Naive thymus-derived CD4-positive, alpha-beta T cell (primary cell): ENCODE measurements at regions of chr7 and their contacts with region 1.

Region 1: GRCh38 chr7:29105752-29106668 is 40.3 kb downstream of the CPVL start:
- DNase-seq: peak in 4 of 9 donors; percentile 4 to 33 (median 14)
- ATAC-seq: peak; percentile 69
- H3K4me3 ChIP-seq: no peak overlapping the region
- H3K4me3 Mint-ChIP-seq: no peak overlapping the region
- H3K27ac ChIP-seq: no peak overlapping the region
- H3K27ac Mint-ChIP-seq: no peak overlapping the region
- H3K4me1 ChIP-seq: no peaks in the 10 kb centered on the region
- H3K4me1 Mint-ChIP-seq: peaks cover 0 to 5% (median 3%) of the 10 kb centered on the region in 7 donors
- H3K27me3 ChIP-seq: no peaks in the 10 kb centered on the region
- H3K27me3 Mint-ChIP-seq: peaks cover 0 to 19% (median 16%) of the 10 kb centered on the region in 5 donors

Region 2: DNA sequence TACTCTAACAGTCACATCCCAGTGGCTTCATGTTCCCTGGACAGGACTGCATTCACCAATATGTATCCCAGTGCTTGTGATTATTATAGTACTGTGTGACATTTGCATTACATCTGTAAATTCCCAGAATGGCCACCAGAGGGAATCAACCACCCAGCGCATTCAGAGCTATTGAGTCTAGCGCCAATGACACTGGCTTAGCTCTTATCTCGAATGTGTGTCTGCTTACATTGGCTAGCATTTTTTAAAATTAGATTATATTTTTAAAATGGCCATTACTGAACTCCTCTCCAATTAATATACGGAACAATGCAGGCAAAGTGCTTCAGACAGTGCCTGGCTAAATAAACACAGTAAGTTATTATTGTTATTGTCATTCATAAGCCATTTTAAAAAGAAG is 184.2 kb before region 1 on chr7:
- CTCF ChIA-PET with region 1: interaction called, 38 read pairs
- POLR2A ChIA-PET with region 1: no interaction called
- intact Hi-C with region 1: loop called (anchors 1 kb)
- DNase-seq: peak in 7 of 9 donors; percentile 17 to 56 (median 39)
- ATAC-seq: peak; percentile 88
- H3K4me3 ChIP-seq: no peak overlapping the region
- H3K4me3 Mint-ChIP-seq: peak overlapping the region in 1 of 10 donors; percentile 16
- H3K27ac ChIP-seq: no peak overlapping the region
- H3K27ac Mint-ChIP-seq: no peak overlapping the region
- H3K4me1 ChIP-seq: peaks cover 0 to 8% of the 10 kb centered on the region in 2 donors
- H3K4me1 Mint-ChIP-seq: peaks cover 0 to 23% (median 14%) of the 10 kb centered on the region in 7 donors
- H3K27me3 ChIP-seq: no peaks in the 10 kb centered on the region
- H3K27me3 Mint-ChIP-seq: peaks cover 0 to 22% (median 0%) of the 10 kb centered on the region in 5 donors

Region 3: GRCh38 chr7:28926871-28927597 is 179.0 kb before region 1 on chr7:
- CTCF ChIA-PET with region 1: interaction called, 38 read pairs
- POLR2A ChIA-PET with region 1: no interaction called
- intact Hi-C with region 1: loop called (anchors 1 kb)
- DNase-seq: peak; percentile 16 to 72 (median 60)
- ATAC-seq: peak; percentile 93
- H3K4me3 ChIP-seq: peak overlapping the region; percentile 57
- H3K4me3 Mint-ChIP-seq: peak overlapping the region; percentile 79 to 97 (median 90)
- H3K27ac ChIP-seq: no peak overlapping the region
- H3K27ac Mint-ChIP-seq: peak overlapping the region in 8 of 9 donors; percentile 9 to 92 (median 53)
- H3K4me1 ChIP-seq: peaks cover 4 to 12% of the 10 kb centered on the region in 2 donors
- H3K4me1 Mint-ChIP-seq: peaks cover 0 to 36% (median 23%) of the 10 kb centered on the region in 7 donors
- H3K27me3 ChIP-seq: no peaks in the 10 kb centered on the region
- H3K27me3 Mint-ChIP-seq: peaks cover 3 to 29% (median 7%) of the 10 kb centered on the region in 5 donors

Region 4: DNA sequence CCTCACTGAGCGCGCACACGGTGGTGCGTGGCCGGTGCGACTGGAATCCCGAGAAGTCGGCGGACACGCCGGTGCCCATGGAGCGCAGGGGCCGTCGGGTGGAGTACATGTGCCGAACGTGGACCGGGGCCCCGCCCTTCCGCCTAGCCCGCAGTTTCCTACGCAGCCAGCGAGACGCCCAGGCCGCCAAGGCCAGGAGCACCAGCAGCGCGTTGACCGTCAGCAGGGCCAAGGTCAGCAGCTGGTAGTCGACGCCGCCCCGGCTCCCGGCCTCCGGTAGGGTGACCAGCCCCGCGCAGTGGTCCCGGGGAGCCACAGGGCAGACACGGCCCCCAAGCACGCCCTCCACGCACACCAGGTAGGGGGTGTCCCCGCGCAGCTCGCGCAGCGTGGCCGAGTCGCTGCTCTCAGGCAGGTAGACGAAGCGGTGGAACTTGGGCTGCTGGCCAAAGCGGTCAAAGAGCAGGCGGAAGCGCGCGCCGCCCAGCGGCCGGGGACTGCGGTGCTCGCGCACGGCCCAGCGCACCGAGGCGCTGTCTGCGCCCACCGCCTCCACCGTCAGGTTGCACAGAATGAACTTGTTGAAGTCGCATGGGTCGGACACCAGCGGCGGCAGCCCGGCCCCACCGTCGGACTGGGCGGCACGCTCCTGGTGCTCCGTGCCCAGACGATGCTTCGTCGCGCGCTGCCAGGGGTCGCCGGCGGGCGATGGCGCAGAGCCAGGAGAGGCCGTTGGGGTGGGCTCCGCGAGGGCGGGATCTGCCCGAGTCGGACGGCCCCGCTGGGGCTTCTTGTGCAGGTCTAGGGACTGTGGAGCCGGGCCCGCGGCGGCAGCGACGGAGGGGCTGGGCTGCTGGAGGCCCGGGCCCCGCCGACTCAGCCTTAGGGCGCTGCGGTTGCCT is 150.0 kb before region 1 on chr7:
- CTCF ChIA-PET with region 1: no interaction called
- POLR2A ChIA-PET with region 1: no interaction called
- intact Hi-C with region 1: loop called in 1 of 2 experiments (anchors 1 kb)
- DNase-seq: peak in 2 of 9 donors; percentile 17 to 37
- ATAC-seq: peak; percentile 47
- H3K4me3 ChIP-seq: no peak overlapping the region
- H3K4me3 Mint-ChIP-seq: peak overlapping the region in 5 of 10 donors; percentile 20 to 73 (median 49)
- H3K27ac ChIP-seq: no peak overlapping the region
- H3K27ac Mint-ChIP-seq: no peak overlapping the region
- H3K4me1 ChIP-seq: peaks cover 0 to 3% of the 10 kb centered on the region in 2 donors
- H3K4me1 Mint-ChIP-seq: peaks cover 4 to 12% (median 8%) of the 10 kb centered on the region in 7 donors
- H3K27me3 ChIP-seq: no peaks in the 10 kb centered on the region
- H3K27me3 Mint-ChIP-seq: peaks cover 61 to 75% (median 68%) of the 10 kb centered on the region in 5 donors